Activated B cell treated with CpG ODN at 0.5 μM for 24 hours (primary cell): ENCODE measurements at regions of chr1 and their contacts with region 1.

Region 1: DNA sequence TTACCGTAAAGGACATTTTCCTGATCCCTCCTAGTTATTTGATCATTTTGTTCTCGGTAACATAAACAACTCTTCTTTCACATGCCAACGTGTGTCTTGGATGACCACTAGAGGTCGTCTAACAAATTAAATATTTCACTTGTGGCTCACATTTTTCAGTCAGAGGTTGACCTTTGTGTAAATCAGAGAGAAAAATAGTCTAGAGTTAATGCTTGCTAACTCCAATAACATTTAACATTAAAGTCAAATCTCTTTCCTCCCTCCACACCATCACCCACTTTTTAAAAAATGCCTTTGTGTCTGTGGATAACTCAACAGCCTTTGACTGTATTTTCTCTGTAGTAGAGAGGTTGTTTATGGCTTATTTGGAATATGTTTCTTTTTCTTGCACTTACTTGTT is 220.5 kb upstream of the B3GALT2 start:
- DNase-seq: no peak
- ATAC-seq: no peak
- H3K4me3 Mint-ChIP-seq: no peak overlapping the region
- H3K27ac Mint-ChIP-seq: no peak overlapping the region
- H3K4me1 Mint-ChIP-seq: peaks cover 4% of the 10 kb centered on the region
- H3K27me3 Mint-ChIP-seq: no peaks in the 10 kb centered on the region
- CTCF ChIP-seq: peak; percentile 57

Region 2: DNA sequence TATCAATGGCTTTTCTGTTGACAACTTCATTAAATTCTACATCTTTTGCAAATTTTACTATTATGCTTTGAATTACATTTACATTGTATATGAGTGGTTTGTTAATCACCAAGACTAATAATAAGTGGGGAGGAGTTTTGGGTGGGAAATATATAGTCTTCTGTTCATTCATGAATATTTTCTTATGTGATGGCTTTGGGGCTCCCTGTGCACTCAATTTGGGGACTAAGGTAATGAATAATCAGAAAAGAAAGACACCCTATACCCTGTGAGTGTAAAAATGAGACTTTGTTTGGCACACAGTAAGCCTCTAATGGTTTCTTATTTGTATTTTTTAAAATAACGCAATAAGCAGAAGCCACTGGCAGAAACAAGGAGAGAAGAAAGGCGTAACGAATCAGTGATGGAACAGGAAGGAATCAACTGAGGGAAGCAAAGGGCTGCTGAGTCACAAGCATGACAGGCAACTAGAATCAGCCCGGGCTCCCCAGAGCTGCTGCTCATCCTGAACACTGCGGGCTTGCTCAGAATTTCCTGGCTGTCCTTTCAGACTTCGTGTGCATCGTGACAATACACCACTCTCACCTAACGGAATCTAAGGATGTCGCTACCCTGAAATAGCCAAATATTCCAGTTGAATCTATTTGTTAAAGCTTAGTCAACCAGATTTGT is 618.9 kb before region 1 on chr1:
- CTCF ChIA-PET with region 1: no interaction called
- POLR2A ChIA-PET with region 1: no interaction called
- intact Hi-C with region 1: no loop called
- DNase-seq: no peak
- ATAC-seq: no peak
- H3K4me3 Mint-ChIP-seq: no peak overlapping the region
- H3K27ac Mint-ChIP-seq: no peak overlapping the region
- H3K4me1 Mint-ChIP-seq: no peaks in the 10 kb centered on the region
- H3K27me3 Mint-ChIP-seq: peaks cover 15% of the 10 kb centered on the region
- CTCF ChIP-seq: no peak

Region 3: GRCh38 chr1:193013005-193013404 is 393.9 kb before region 1 on chr1:
- CTCF ChIA-PET with region 1: no interaction called
- POLR2A ChIA-PET with region 1: no interaction called
- intact Hi-C with region 1: no loop called
- DNase-seq: no peak
- ATAC-seq: no peak
- H3K4me3 Mint-ChIP-seq: no peak overlapping the region
- H3K27ac Mint-ChIP-seq: no peak overlapping the region
- H3K4me1 Mint-ChIP-seq: no peaks in the 10 kb centered on the region
- H3K27me3 Mint-ChIP-seq: no peaks in the 10 kb centered on the region
- CTCF ChIP-seq: no peak

Region 4: GRCh38 chr1:193183019-193183627 is 223.8 kb before region 1 on chr1:
- CTCF ChIA-PET with region 1: no interaction called
- POLR2A ChIA-PET with region 1: no interaction called
- intact Hi-C with region 1: loop called (anchors 5 kb)
- DNase-seq: no peak
- ATAC-seq: peak; percentile 61
- H3K4me3 Mint-ChIP-seq: no peak overlapping the region
- H3K27ac Mint-ChIP-seq: no peak overlapping the region
- H3K4me1 Mint-ChIP-seq: peaks cover 24% of the 10 kb centered on the region
- H3K27me3 Mint-ChIP-seq: no peaks in the 10 kb centered on the region
- CTCF ChIP-seq: peak; percentile 83

Region 5: DNA sequence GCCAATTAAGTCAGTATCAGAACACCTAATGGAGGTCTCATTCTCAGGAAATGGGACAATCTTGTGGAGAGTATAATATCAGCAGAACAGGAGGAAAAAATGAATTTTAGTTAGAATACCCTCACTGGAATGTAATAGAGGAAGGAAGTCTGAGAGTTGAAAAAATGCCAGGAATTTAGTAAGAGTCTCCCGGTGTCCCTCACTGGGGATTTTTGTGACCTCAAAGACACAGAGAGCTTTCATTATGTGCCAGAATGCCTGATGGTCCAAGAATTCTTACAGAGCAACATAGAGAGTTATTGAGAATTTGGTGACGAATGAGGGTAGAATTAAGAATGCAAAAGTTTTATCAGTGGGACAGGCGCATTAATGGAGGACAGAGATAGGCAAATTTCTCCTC is 223.0 kb after region 1 on chr1:
- CTCF ChIA-PET with region 1: no interaction called
- POLR2A ChIA-PET with region 1: no interaction called
- intact Hi-C with region 1: loop called (anchors 5 kb)
- DNase-seq: no peak
- ATAC-seq: no peak
- H3K4me3 Mint-ChIP-seq: no peak overlapping the region
- H3K27ac Mint-ChIP-seq: no peak overlapping the region
- H3K4me1 Mint-ChIP-seq: no peaks in the 10 kb centered on the region
- H3K27me3 Mint-ChIP-seq: peaks cover 9% of the 10 kb centered on the region
- CTCF ChIP-seq: no peak

Region 6: DNA sequence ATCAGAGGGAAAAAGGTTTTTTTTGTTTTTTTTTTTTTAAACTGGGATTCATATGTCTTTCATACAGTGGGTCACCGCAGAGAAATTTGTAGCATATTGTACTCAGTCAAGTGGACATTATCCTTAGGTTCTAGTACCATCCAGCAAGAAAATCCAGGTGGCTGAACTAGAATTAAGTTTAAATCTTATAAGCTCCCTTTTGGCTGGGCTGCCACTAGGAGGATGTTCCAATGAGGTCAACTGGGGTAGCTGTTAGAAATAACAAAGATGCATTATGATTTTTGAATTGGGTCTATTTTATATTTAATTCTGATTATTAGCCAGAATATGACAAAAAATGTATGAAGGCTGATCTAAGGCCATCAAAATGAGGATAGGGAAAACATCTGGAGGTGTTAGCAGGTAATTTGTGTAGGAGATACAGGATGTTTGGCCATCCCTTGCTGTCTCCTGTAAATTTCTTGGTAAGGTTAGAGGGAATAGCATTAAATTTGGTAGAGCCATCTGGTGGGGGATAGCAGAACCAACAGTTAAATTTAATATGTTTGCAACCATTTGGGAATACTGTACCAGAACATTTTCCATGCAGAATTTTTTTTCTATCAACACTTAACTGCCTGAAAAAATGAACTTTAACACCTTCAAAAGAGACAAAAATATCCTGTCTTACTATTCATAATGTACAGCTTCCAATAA is 348.0 kb after region 1 on chr1:
- CTCF ChIA-PET with region 1: interaction called, 3 read pairs
- POLR2A ChIA-PET with region 1: no interaction called
- intact Hi-C with region 1: loop called (anchors 1 kb)
- DNase-seq: no peak
- ATAC-seq: no peak
- H3K4me3 Mint-ChIP-seq: no peak overlapping the region
- H3K27ac Mint-ChIP-seq: no peak overlapping the region
- H3K4me1 Mint-ChIP-seq: no peaks in the 10 kb centered on the region
- H3K27me3 Mint-ChIP-seq: no peaks in the 10 kb centered on the region
- CTCF ChIP-seq: no peak